Caco-2 (cell line): ENCODE measurements at regions of chr4 and their contacts with region 1.

Region 1: GRCh38 chr4:147576084-147576483 is 41.1 kb upstream of the TMEM184C start:
- DNase-seq: no peak
- H3K4me3 ChIP-seq: no peak overlapping the region
- H3K4me3 Mint-ChIP-seq: no peak overlapping the region
- H3K27ac Mint-ChIP-seq: no peak overlapping the region
- H3K4me1 ChIP-seq: no peaks in the 10 kb centered on the region
- H3K4me1 Mint-ChIP-seq: no peaks in the 10 kb centered on the region
- H3K27me3 ChIP-seq: no peaks in the 10 kb centered on the region
- H3K27me3 Mint-ChIP-seq: no peaks in the 10 kb centered on the region
- CTCF ChIP-seq: no peak

Region 2: DNA sequence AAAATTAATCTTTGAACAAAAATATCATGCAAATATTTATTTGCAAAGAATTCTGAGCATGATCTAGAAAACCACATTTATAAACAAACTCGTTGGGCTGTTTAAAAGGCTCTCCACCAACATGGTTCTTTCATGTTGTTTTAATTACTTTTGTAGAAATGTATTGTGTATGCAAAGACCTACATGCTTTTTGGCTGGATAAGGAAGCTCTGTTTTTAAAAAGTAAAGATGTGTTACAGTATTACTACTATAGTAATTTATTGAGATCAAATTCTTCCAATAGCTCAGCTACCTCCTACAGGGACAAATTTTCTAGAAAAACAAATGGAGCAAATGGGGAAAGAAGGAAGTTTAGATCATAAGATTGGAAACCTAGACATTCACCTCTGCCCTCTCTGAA is 452.9 kb before region 1 on chr4:
- CTCF ChIA-PET with region 1: no interaction called
- POLR2A ChIA-PET with region 1: interaction called, 19 read pairs
- intact Hi-C with region 1: no loop called
- DNase-seq: no peak
- H3K4me3 ChIP-seq: no peak overlapping the region
- H3K4me3 Mint-ChIP-seq: no peak overlapping the region
- H3K27ac Mint-ChIP-seq: no peak overlapping the region
- H3K4me1 ChIP-seq: no peaks in the 10 kb centered on the region
- H3K4me1 Mint-ChIP-seq: no peaks in the 10 kb centered on the region
- H3K27me3 ChIP-seq: no peaks in the 10 kb centered on the region
- H3K27me3 Mint-ChIP-seq: peaks cover 6% of the 10 kb centered on the region
- CTCF ChIP-seq: no peak